Panc1 (cell line): ENCODE measurements at regions of chr1 and their contacts with region 1.

Region 1: DNA sequence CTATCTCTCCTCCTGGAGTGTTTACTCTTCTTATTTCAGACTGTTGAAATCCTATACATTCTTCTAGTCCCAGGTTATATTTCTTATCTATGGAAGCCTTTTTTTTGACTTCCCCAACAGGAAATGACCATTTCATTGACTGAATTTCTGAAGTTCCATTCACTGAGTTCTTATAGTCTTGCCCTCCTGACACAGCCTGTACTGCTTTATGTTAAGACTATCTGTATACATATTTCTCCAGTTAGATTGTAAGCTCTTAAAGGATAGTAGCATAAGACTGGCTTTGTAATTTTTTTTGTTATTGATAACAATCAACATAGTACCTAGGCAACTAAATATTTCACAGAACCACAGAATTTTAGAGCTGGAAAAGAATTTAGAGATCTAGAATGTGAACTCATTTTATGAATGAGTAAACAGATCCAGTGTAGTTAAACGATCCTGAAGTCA is 14.9 kb upstream of the MACF1 start:
- DNase-seq: no peak
- ATAC-seq: no peak
- H3K4me3 ChIP-seq: no peak overlapping the region
- H3K27ac ChIP-seq: peak overlapping the region; percentile 97
- H3K4me1 ChIP-seq: peaks cover 94% of the 10 kb centered on the region
- H3K27me3 ChIP-seq: no peaks in the 10 kb centered on the region
- CTCF ChIP-seq: no peak

Region 2: GRCh38 chr1:39063775-39064174 is 125.8 kb before region 1 on chr1:
- CTCF ChIA-PET with region 1: no interaction called
- POLR2A ChIA-PET with region 1: no interaction called
- in situ Hi-C with region 1: no loop called
- intact Hi-C with region 1: no loop called
- DNase-seq: no peak
- ATAC-seq: no peak
- H3K4me3 ChIP-seq: no peak overlapping the region
- H3K27ac ChIP-seq: no peak overlapping the region
- H3K4me1 ChIP-seq: no peaks in the 10 kb centered on the region
- H3K27me3 ChIP-seq: no peaks in the 10 kb centered on the region
- CTCF ChIP-seq: no peak

Region 3: GRCh38 chr1:39258146-39258924 is 68.7 kb after region 1 on chr1:
- CTCF ChIA-PET with region 1: interaction called, 28 read pairs
- POLR2A ChIA-PET with region 1: interaction called, 6 read pairs
- in situ Hi-C with region 1: no loop called
- intact Hi-C with region 1: loop called (anchors 5 kb)
- DNase-seq: peak; percentile 72
- ATAC-seq: peak; percentile 94
- H3K4me3 ChIP-seq: no peak overlapping the region
- H3K27ac ChIP-seq: peak overlapping the region; percentile 52
- H3K4me1 ChIP-seq: peaks cover 12% of the 10 kb centered on the region
- H3K27me3 ChIP-seq: no peaks in the 10 kb centered on the region
- CTCF ChIP-seq: peak; percentile 93

Region 4: DNA sequence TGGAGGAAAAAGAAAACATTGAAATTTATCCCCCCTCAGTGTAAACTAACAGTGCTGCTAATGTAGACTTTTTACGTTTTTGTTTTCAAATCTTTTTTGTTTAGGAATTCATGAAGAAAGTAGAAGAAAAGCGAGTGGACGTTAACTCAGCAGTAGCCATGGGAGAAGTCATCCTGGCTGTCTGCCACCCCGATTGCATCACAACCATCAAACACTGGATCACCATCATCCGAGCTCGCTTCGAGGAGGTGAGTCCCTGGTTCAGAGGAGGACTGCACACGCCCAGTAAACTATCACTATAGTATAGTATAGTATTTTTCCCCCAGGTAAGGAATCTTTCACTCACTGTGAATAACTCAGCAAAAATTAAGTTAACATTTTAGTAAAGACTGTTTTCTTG is 264.0 kb after region 1 on chr1:
- CTCF ChIA-PET with region 1: no interaction called
- POLR2A ChIA-PET with region 1: interaction called, 12 read pairs
- in situ Hi-C with region 1: no loop called
- intact Hi-C with region 1: no loop called
- DNase-seq: no peak
- ATAC-seq: no peak
- H3K4me3 ChIP-seq: no peak overlapping the region
- H3K27ac ChIP-seq: no peak overlapping the region
- H3K4me1 ChIP-seq: no peaks in the 10 kb centered on the region
- H3K27me3 ChIP-seq: no peaks in the 10 kb centered on the region
- CTCF ChIP-seq: no peak